ENCODE measurements at regions of chr7 and their contacts with region 1.

Region 1: GRCh38 chr7:21486511-21486910 is 56.3 kb upstream of the DNAH11 start:
- DNase-seq: no peak
- H3K4me3 ChIP-seq: no peak overlapping the region
- H3K27ac ChIP-seq: no peak overlapping the region
- H3K4me1 ChIP-seq: no peaks in the 10 kb centered on the region
- H3K27me3 ChIP-seq: no peaks in the 10 kb centered on the region
- CTCF ChIP-seq: no peak
- POLR2A ChIP-seq: no peak

Region 2: DNA sequence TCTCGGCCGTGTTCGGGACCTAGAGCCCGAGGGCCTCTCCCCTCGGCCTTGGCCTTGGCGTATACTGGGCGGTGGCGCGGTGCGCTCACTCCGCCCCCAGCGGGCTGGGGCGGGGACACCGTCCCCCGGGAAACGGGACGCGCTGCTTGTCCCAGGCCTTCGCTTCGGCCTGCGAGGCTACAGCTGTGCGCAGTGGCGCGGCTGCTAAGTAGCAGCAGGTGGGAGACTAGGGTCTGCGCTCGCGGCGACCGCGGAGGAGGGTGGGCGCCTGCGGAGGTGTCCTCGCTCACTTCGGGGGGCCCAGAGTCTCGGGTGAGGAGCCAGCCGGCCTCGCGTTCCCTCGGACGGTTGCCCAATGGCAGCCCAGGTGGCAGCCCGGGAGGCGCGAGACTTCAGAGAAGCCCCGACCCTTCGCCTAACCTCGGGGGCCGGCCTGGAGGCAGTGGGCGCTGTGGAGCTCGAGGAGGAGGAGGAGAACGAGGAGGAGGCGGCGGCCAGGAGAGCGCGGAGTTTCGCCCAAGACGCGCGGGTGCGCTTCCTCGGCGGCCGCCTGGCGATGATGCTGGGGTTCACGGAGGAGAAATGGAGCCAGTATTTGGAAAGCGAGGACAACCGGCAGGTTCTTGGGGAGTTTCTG is 56.5 kb after region 1 on chr7 and contains the start of gene DNAH11:
- intact Hi-C with region 1: loop called (anchors 2 kb)
- DNase-seq: no peak
- H3K4me3 ChIP-seq: peak within 1 kb of the TSS; percentile 33 to 45
- H3K27ac ChIP-seq: no peak within 1 kb of the TSS
- H3K4me1 ChIP-seq: peaks cover 19% of the 10 kb centered on the region
- H3K27me3 ChIP-seq: no peaks in the 10 kb centered on the region
- CTCF ChIP-seq: no peak
- POLR2A ChIP-seq: no peak
- total RNA-seq, gene DNAH11: 1.7 TPM